ENCODE measurements at regions of chr20 and their contacts with region 1.

Region 1: DNA sequence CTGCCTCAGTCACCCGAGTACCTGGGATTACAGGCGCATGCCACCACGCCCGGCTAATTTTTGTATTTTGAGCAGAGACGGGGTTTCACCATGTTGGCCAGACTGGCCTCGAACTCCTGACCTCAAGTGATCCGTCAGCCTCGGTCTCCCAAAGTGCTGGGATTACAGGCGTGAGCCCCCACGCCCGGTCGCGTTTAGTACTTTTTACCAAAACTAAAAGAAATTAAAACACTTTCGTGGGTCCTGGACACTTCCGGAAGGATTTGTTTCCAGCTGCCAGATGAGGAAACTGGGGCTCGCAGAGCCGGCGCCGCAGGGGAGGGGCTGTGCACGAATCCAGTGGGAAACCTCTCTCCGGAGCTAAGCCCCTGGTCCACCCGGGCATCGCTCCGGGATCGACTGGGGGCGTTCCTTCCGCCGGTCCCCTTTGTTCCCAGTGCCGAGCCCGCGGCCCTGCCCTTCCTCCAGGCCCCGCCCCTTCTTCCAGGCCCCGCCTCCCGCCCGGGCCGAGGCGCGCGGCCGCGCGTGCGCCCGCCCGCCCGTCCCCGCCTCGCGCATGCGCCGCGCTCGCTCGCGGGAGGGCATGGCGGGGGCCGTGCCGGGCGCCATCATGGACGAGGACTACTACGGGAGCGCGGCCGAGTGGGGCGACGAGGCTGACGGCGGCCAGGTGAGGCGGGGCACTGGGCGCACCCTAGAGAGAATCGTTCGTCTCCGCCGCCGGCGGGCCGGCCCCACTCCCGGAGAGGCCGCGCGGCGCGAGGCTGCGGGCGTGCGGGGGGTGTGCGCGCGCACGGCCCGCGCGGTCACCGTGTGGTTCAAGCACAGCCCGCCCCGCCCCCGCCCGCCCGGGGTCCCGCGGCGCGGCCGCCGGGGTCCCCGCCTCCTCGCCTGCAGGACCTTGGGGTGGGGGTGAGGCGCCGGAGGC is at the start of gene NELFCD:
- DNase-seq: peak; percentile 95
- ATAC-seq: peak; percentile 89
- H3K4me3 Mint-ChIP-seq: peak within 1 kb of the TSS; percentile 91
- H3K27ac Mint-ChIP-seq: peak within 1 kb of the TSS; percentile 80
- H3K4me1 Mint-ChIP-seq: peaks cover 45% of the 10 kb centered on the region
- H3K27me3 Mint-ChIP-seq: no peaks in the 10 kb centered on the region
- CTCF ChIP-seq: no peak
- total RNA-seq, gene NELFCD: 97.2 and 107 TPM in 2 replicates

Region 2: DNA sequence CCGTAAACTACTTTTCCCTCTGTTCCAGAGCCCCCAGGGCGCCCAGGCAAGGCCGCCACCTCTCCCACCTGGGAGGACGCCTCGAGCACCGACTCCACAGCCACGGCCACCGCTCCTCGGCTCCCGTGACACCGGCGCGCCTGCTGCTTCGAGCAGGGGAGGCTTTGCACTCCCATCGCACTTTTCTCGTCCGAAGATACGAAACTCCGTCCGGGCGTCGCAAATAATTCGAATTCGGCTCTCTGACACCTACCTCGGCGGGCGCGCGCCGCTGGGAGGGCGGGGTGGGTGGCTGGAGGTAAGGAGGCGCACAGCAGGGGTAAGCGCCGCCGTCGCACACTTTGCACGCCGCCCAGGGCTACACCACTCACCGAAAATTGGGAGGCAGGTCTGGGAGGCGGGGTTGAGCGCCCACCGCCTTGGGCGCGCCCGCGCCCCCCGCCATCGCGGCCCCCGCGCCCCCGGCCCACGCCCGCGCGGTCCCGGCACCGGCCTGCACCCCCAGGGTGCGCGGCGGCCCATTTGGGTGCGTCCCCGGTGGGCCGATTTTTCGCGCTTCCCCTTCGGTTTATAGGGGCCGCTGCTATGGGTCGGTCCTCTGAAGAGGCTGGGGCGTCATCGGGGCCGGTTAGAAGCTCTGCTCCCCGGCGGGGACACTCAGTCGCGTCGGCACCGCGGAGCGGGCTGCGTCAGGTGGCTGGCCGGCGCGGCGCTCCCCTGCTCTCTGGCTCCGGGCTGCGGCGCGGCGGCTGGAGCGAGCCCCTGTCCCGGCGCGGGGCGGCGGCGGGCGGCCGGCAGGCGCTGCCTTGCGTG is 92.2 kb before region 1 on chr20:
- CTCF ChIA-PET with region 1: no interaction called
- POLR2A ChIA-PET with region 1: interaction called, 22 read pairs
- intact Hi-C with region 1: loop called (anchors 1 kb)
- DNase-seq: peak; percentile 73
- ATAC-seq: peak; percentile 45
- H3K4me3 Mint-ChIP-seq: peak overlapping the region; percentile 84
- H3K27ac Mint-ChIP-seq: peak overlapping the region; percentile 59
- H3K4me1 Mint-ChIP-seq: peaks cover 27% of the 10 kb centered on the region
- H3K27me3 Mint-ChIP-seq: no peaks in the 10 kb centered on the region
- CTCF ChIP-seq: no peak

Region 3: GRCh38 chr20:58938541-58938940 is 42.4 kb before region 1 on chr20:
- CTCF ChIA-PET with region 1: no interaction called
- POLR2A ChIA-PET with region 1: interaction called, 5 read pairs
- intact Hi-C with region 1: loop called (anchors 5 kb)
- DNase-seq: no peak
- ATAC-seq: no peak
- H3K4me3 Mint-ChIP-seq: no peak overlapping the region
- H3K27ac Mint-ChIP-seq: peak overlapping the region; percentile 24
- H3K4me1 Mint-ChIP-seq: peaks cover 15% of the 10 kb centered on the region
- H3K27me3 Mint-ChIP-seq: no peaks in the 10 kb centered on the region
- CTCF ChIP-seq: no peak

Region 4: DNA sequence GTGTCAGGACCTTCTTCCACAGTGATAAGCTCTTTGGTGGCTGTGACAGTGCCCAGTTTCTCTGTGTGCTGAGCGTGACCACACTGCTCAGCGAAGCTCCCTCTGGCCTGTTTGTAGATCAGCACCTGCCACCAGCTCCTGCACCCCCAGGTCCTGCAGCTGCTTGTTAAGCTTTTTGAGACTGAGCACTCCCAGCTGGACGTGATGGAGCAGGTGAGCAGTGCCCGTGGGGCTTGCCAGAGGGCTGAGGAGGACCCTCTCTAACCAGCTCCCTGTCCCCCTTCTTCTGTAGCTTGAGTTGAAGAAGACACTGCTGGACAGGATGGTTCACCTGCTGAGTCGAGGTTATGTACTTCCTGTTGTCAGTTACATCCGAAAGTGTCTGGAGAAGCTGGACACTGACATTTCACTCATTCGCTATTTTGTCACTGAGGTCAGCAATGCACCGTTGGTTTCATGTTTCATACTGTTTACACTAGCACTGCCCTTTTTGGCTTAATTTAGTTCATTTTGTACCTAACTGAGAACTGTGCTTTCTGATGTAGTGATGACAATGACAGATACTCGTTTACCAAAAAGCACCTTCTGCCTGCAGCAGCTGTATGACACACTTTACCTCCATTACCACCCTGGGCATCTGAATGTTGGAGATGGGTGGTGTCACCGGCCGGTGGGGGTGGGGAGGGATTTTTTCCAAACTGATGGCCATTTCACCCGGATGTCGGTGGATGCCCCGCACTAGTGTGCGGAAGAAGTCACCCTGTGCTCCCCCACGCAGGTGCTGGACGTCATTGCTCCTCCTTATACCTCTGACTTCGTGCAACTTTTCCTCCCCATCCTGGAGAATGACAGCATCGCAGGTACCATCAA is 12.6 kb after region 1 on chr20:
- CTCF ChIA-PET with region 1: no interaction called
- POLR2A ChIA-PET with region 1: interaction called, 26 read pairs
- intact Hi-C with region 1: no loop called
- DNase-seq: no peak
- ATAC-seq: no peak
- H3K4me3 Mint-ChIP-seq: no peak overlapping the region
- H3K27ac Mint-ChIP-seq: peak overlapping the region; percentile 63
- H3K4me1 Mint-ChIP-seq: peaks cover 44% of the 10 kb centered on the region
- H3K27me3 Mint-ChIP-seq: no peaks in the 10 kb centered on the region
- CTCF ChIP-seq: no peak

Region 5: GRCh38 chr20:59042796-59043660 is 62.1 kb after region 1 on chr20:
- CTCF ChIA-PET with region 1: no interaction called
- POLR2A ChIA-PET with region 1: interaction called, 4 read pairs
- intact Hi-C with region 1: loop called (anchors 1 kb)
- DNase-seq: peak; percentile 97
- ATAC-seq: peak; percentile 97
- H3K4me3 Mint-ChIP-seq: peak overlapping the region; percentile 95
- H3K27ac Mint-ChIP-seq: peak overlapping the region; percentile 91
- H3K4me1 Mint-ChIP-seq: peaks cover 52% of the 10 kb centered on the region
- H3K27me3 Mint-ChIP-seq: no peaks in the 10 kb centered on the region
- CTCF ChIP-seq: no peak

Measured in activated B cell treated with CpG ODN at 0.5 μM for 24 hours (primary cell).